ENCODE measurements at regions of chr7 and their contacts with region 1.

Region 1: GRCh38 chr7:48109848-48110663 is 21.0 kb downstream of the UPP1 start:
- DNase-seq: peak; percentile 75
- H3K4me3 Mint-ChIP-seq: no peak overlapping the region
- H3K27ac Mint-ChIP-seq: no peak overlapping the region
- H3K4me1 Mint-ChIP-seq: peaks cover 23% of the 10 kb centered on the region
- H3K27me3 Mint-ChIP-seq: no peaks in the 10 kb centered on the region

Region 2: DNA sequence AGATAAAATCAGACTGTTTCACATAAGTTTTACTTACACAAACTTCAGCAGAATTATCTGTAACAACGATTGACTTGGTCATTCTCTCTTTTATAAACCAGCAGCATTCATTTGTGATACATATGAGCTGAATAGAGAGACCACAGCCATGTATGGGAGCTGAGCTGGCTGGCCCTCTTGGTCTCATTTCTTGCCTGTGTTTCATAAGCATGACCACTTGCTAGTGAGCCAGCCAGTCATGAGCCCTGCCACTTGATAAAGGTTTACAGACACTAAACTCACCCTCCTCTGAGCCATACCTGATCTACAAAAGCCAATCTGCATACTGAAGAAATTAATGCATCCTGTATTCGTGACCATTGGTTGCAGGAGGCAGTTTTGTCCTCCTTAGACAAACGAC is 243.9 kb before region 1 on chr7:
- intact Hi-C with region 1: no loop called
- DNase-seq: no peak
- H3K4me3 Mint-ChIP-seq: no peak overlapping the region
- H3K27ac Mint-ChIP-seq: no peak overlapping the region
- H3K4me1 Mint-ChIP-seq: peaks cover 6% of the 10 kb centered on the region
- H3K27me3 Mint-ChIP-seq: no peaks in the 10 kb centered on the region

Region 3: DNA sequence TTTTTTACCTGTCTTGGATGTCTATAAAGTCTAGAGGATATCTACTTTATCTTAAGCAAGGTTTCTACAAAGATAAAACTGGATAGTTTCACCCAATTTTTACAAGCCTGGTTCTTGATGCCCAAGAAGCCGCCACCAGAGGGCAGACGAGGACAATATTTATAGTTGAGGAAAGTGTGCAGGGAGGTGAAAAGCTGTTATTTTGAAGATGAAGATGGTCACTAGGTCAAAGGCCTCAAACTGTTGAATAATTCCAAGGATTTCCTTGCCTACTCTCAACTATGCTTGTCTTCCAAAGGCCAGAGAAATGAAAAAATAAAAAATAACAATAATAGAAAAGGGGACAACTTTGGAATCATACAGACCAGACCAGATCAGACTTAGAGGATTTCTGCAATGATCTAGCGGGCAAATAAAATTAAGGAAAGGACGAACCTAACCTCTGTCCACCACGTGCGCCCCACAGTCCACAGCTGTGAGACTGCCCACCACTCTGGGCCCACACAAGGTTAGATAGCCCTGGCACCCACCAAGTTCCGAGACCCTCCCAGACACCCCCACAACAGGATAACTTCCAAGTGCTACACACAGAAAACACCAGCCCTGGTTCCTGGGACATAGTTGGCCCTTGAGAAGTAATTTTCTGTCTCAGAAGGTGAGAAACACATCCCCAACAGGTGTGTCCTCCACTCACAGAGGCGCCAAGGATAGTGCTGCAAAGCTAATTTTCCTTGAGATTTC is 164.6 kb before region 1 on chr7:
- intact Hi-C with region 1: loop called (anchors 1 kb)
- DNase-seq: peak; percentile 44
- H3K4me3 Mint-ChIP-seq: no peak overlapping the region
- H3K27ac Mint-ChIP-seq: no peak overlapping the region
- H3K4me1 Mint-ChIP-seq: no peaks in the 10 kb centered on the region
- H3K27me3 Mint-ChIP-seq: no peaks in the 10 kb centered on the region

Region 4: GRCh38 chr7:47979145-47979831 is 130.8 kb before region 1 on chr7 and contains the start of gene HUS1:
- intact Hi-C with region 1: loop called (anchors 1 kb)
- DNase-seq: peak; percentile 88
- H3K4me3 Mint-ChIP-seq: peak within 1 kb of the TSS; percentile 90
- H3K27ac Mint-ChIP-seq: peak within 1 kb of the TSS; percentile 96
- H3K4me1 Mint-ChIP-seq: peaks cover 24% of the 10 kb centered on the region
- H3K27me3 Mint-ChIP-seq: peaks cover 5% of the 10 kb centered on the region
- total RNA-seq, gene HUS1: 34.4 and 36.4 TPM in 2 replicates

Region 5: GRCh38 chr7:48035301-48035966 is 74.6 kb before region 1 on chr7 and contains the start of gene C7orf57:
- intact Hi-C with region 1: loop called (anchors 1 kb)
- DNase-seq: peak; percentile 87
- H3K4me3 Mint-ChIP-seq: peak within 1 kb of the TSS; percentile 81
- H3K27ac Mint-ChIP-seq: peak within 1 kb of the TSS; percentile 72
- H3K4me1 Mint-ChIP-seq: peaks cover 11% of the 10 kb centered on the region
- H3K27me3 Mint-ChIP-seq: peaks cover 53% of the 10 kb centered on the region
- total RNA-seq, gene C7orf57: 0.10 and 0.31 TPM in 2 replicates

Region 6: GRCh38 chr7:48097521-48098231 is 12.4 kb before region 1 on chr7:
- intact Hi-C with region 1: loop called (anchors 1 kb)
- DNase-seq: peak; percentile 39
- H3K4me3 Mint-ChIP-seq: peak overlapping the region; percentile 42
- H3K27ac Mint-ChIP-seq: peak overlapping the region; percentile 92
- H3K4me1 Mint-ChIP-seq: peaks cover 75% of the 10 kb centered on the region
- H3K27me3 Mint-ChIP-seq: no peaks in the 10 kb centered on the region

Region 7: GRCh38 chr7:48130658-48131108 is 20.6 kb after region 1 on chr7:
- intact Hi-C with region 1: no loop called
- DNase-seq: no peak
- H3K4me3 Mint-ChIP-seq: no peak overlapping the region
- H3K27ac Mint-ChIP-seq: no peak overlapping the region
- H3K4me1 Mint-ChIP-seq: peaks cover 10% of the 10 kb centered on the region
- H3K27me3 Mint-ChIP-seq: peaks cover 11% of the 10 kb centered on the region